ENCODE measurements at regions of chr9 and their contacts with region 1.

Region 1: DNA sequence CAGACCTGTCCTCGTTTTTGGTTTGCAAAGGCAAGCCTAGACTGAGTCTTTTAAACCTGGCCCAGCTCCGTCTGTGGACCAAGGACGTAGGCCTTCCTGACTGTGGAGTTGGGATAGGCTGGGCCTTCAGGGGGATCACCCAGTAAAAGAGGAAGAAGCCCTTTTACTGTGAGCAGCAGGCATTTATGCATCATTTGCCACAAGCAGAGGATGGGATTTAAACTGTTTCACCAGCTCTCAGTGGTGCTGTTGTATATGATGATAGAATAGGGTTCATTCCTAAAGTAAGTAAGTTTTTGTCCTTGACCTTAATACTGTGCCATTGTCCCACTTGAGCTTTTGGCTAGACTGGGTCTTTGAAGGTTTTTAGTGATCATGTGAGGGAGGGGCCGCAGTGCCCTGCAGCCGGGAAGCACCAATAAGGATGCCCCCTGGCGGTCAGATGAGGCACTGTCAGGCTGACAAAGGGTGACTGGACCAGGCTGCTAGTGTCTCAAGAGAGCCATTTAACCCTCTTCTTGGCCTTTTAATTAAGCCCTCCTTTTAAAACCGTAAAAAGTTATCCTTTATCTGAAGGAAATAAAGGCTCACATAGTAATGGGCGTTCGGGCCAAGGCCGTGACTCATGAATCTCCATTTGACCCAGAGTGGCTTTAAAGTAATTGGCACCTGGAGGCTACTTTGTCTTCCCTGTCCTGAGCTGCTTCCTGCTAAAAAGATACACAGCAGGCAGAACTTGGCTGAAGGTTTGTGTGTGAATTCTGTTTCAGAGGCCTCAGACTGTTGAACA is 74.0 kb downstream of the UBAP1 start:
- DNase-seq: peak; percentile 67
- H3K27ac ChIP-seq: peak overlapping the region; percentile 99
- CTCF ChIP-seq: peak; percentile 99

Region 2: DNA sequence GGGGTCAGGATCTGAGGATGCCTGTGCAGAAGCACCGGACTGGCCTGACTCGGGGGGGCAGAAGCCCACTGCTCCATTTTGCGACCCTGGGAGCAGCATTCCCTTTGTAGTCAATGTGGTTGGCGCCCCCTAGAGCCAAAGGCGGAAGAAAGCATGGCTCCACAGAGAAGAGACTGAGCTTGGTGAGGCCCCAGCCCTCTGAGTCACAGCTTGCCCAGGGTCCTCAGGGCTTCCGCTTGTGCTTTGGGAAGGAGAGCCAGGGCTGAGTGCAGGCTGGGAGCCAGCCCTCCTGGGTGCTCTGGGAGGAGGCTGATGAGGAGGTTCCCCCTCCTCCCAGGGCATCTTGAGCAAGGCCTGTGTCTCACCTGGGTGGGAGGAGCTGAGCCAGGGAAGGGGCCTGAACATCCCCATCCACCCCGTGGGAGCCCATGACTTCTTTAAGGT is 800.0 kb before region 1 on chr9:
- CTCF ChIA-PET with region 1: interaction called, 10 read pairs
- POLR2A ChIA-PET with region 1: no interaction called
- DNase-seq: peak; percentile 96
- H3K27ac ChIP-seq: peak overlapping the region; percentile 76
- CTCF ChIP-seq: peak; percentile 80

Region 3: GRCh38 chr9:34098307-34098706 is 154.6 kb before region 1 on chr9:
- CTCF ChIA-PET with region 1: no interaction called
- POLR2A ChIA-PET with region 1: no interaction called
- DNase-seq: no peak
- H3K27ac ChIP-seq: 0 out of 2 replicates have a peak overlapping the region, but pooled peaks have one; percentile 1
- CTCF ChIP-seq: no peak

Region 4: GRCh38 chr9:34126207-34127034 is 126.4 kb before region 1 on chr9 and contains the start of gene DCAF12:
- CTCF ChIA-PET with region 1: interaction called, 12 read pairs
- POLR2A ChIA-PET with region 1: no interaction called
- DNase-seq: peak; percentile 98
- H3K27ac ChIP-seq: peak within 1 kb of the TSS; percentile 90
- CTCF ChIP-seq: no peak

Region 5: GRCh38 chr9:34179213-34180136 is 73.4 kb before region 1 on chr9:
- CTCF ChIA-PET with region 1: interaction called, 11 read pairs
- POLR2A ChIA-PET with region 1: no interaction called
- DNase-seq: peak; percentile 59
- H3K27ac ChIP-seq: peak overlapping the region; percentile 94
- CTCF ChIP-seq: no peak

Region 6: DNA sequence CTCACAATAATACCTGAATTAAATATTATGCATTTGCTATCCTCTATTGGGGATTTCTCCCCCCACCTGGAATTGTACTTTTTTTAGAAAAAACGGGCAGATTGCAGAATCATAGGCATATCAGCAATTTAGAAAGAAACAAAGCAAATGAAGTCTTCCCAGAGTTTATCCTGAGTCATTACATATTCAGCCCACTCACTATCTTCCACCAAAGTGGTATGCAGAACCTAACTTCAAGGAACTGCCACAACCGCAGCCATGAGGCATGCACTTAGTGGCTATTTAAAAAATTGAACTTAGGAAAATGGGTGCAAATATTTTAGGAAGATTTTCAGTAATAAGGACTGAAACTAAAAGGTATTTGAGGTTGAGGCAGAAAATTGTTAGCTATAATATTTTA is 25.4 kb before region 1 on chr9:
- CTCF ChIA-PET with region 1: no interaction called
- POLR2A ChIA-PET with region 1: no interaction called
- DNase-seq: no peak
- H3K27ac ChIP-seq: no peak overlapping the region
- CTCF ChIP-seq: no peak

Region 7: DNA sequence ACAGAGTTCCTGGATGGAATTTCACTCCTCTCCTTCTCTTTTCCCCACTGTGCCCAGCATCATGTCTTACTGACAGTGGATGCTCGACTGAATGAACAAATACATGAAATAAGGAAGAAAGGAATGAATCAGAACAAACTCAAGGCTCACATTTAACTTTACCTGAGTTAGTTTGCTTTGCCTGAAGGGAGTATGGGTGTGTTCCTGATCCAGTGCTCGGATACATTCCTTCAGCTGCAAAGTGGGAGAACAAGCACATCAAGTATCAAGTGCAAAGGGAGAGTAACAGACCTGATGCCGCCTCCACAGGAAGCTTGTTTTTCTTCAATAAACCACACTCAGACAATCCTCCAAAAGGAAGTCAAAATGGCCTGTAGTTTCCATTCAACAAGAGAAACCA is 10.1 kb after region 1 on chr9:
- CTCF ChIA-PET with region 1: interaction called, 14 read pairs
- POLR2A ChIA-PET with region 1: no interaction called
- DNase-seq: no peak
- H3K27ac ChIP-seq: no peak overlapping the region
- CTCF ChIP-seq: no peak

Region 8: DNA sequence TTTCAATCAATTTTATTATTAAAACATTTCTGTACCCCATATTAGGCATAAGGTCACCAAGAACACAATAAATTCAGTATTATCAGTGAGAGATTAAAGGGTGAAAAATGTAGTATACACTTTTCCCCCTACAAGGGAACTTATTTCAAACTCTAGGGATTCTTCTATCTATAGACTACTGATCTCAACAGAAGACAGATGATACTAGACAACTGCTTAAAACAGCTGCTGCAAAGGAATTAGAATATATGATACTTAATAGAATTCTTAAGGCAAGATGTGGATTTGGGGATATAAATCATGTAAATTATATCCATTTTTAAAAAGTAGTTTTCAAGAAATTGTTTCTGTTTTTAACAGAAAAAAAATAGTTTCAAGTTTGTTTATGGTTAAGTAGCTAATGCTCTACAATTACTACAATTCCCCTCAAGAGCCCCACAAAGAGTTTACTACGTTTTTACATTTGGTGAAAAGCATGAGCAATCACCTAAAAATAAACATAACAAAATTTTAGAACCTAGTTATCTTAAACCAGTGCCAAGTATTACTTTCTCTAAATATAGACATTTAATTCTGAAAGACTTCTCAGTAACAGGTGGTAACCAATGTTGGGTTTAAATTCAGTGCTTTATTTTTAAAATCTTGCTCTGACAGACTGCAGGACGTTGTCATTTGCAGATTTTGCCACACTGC is 70.2 kb after region 1 on chr9:
- CTCF ChIA-PET with region 1: no interaction called
- POLR2A ChIA-PET with region 1: no interaction called
- DNase-seq: no peak
- H3K27ac ChIP-seq: no peak overlapping the region
- CTCF ChIP-seq: no peak

Region 9: DNA sequence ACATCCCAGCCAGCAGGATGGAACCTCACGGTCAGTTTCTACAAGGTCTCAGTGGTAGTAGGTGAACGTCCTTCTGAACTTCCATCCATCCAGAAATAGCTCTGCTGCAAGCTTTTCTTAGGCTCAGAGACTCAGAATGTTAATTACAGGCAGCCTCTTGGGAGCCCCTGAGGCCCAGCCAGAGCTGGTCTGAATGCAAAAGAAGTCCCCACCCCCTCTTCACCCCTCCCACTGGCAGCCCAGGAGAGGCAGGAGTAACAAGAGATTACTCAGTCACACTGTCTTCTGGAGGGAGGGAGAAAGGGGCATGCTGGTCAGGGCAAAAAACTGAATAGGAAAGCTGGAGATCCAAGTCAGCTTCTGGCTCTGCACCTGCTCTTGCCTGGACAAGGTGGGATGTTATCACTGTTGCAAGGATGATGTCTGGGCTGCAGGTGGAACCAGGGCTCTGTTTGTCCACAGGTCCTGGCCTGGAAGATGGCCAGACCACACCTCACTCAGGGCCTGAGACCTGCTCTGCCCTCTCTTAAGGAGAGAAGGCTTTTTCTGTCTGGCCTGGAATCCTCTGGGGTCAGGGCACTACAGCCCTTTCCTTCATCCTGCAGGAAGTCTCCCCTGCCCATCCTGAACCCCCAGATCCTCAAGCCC is 260.8 kb after region 1 on chr9:
- CTCF ChIA-PET with region 1: no interaction called
- POLR2A ChIA-PET with region 1: no interaction called
- DNase-seq: no peak
- H3K27ac ChIP-seq: no peak overlapping the region
- CTCF ChIP-seq: no peak